Activated CD4-positive, alpha-beta T cell treated with anti-CD3 and anti-CD28 coated beads for 36 hours (primary cell): ENCODE measurements at regions of chr20 and their contacts with region 1.

Region 1: GRCh38 chr20:3407771-3408637 is 535 bp upstream of the DNAAF9 start:
- DNase-seq: peak; percentile 80
- ATAC-seq: peak; percentile 64
- H3K4me3 Mint-ChIP-seq: peak overlapping the region; percentile 83
- H3K27ac Mint-ChIP-seq: peak overlapping the region; percentile 88
- H3K4me1 Mint-ChIP-seq: peaks cover 32% of the 10 kb centered on the region
- H3K27me3 Mint-ChIP-seq: peaks cover 3% of the 10 kb centered on the region

Region 2: GRCh38 chr20:3045816-3046676 is 362.0 kb before region 1 on chr20 and contains the start of gene MRPS26:
- CTCF ChIA-PET with region 1: no interaction called
- POLR2A ChIA-PET with region 1: no interaction called
- intact Hi-C with region 1: loop called in 1 of 2 experiments (anchors 2 kb)
- DNase-seq: peak; percentile 92
- ATAC-seq: peak; percentile 94
- H3K4me3 Mint-ChIP-seq: peak within 1 kb of the TSS; percentile 89
- H3K27ac Mint-ChIP-seq: peak within 1 kb of the TSS; percentile 88
- H3K4me1 Mint-ChIP-seq: peaks cover 27% of the 10 kb centered on the region
- H3K27me3 Mint-ChIP-seq: no peaks in the 10 kb centered on the region
- total RNA-seq, gene MRPS26: 107 to 153 TPM

Region 3: GRCh38 chr20:3173610-3174441 is 234.2 kb before region 1 on chr20:
- CTCF ChIA-PET with region 1: no interaction called
- POLR2A ChIA-PET with region 1: no interaction called
- intact Hi-C with region 1: loop called in 1 of 2 experiments (anchors 1 kb)
- DNase-seq: peak; percentile 94
- ATAC-seq: peak; percentile 40
- H3K4me3 Mint-ChIP-seq: peak overlapping the region; percentile 77
- H3K27ac Mint-ChIP-seq: peak overlapping the region; percentile 55
- H3K4me1 Mint-ChIP-seq: peaks cover 10% of the 10 kb centered on the region
- H3K27me3 Mint-ChIP-seq: peaks cover 19% of the 10 kb centered on the region

Region 4: GRCh38 chr20:3383878-3384495 is 24.0 kb before region 1 on chr20:
- CTCF ChIA-PET with region 1: interaction called, 3 read pairs
- POLR2A ChIA-PET with region 1: no interaction called
- intact Hi-C with region 1: loop called (anchors 1 kb)
- DNase-seq: peak; percentile 71
- ATAC-seq: peak; percentile 96
- H3K4me3 Mint-ChIP-seq: peak overlapping the region; percentile 27
- H3K27ac Mint-ChIP-seq: peak overlapping the region; percentile 80
- H3K4me1 Mint-ChIP-seq: peaks cover 21% of the 10 kb centered on the region
- H3K27me3 Mint-ChIP-seq: no peaks in the 10 kb centered on the region

Region 5: GRCh38 chr20:3470627-3471396 is 62.8 kb after region 1 on chr20 and contains the start of gene ATRN:
- CTCF ChIA-PET with region 1: interaction called, 4 read pairs
- POLR2A ChIA-PET with region 1: no interaction called
- intact Hi-C with region 1: loop called (anchors 1 to 2 kb)
- DNase-seq: peak; percentile 94
- ATAC-seq: peak; percentile 88
- H3K4me3 Mint-ChIP-seq: peak within 1 kb of the TSS; percentile 84
- H3K27ac Mint-ChIP-seq: peak within 1 kb of the TSS; percentile 66
- H3K4me1 Mint-ChIP-seq: peaks cover 26% of the 10 kb centered on the region
- H3K27me3 Mint-ChIP-seq: no peaks in the 10 kb centered on the region
- total RNA-seq, gene ATRN: 6.8 to 7.6 TPM